Heart left ventricle (tissue), 16 donors: ENCODE measurements at regions of chr9 and their contacts with region 1.

Region 1: GRCh38 chr9:73104342-73104741 is 47.3 kb upstream of the ANXA1 start:
- DNase-seq: no peak
- ATAC-seq: no peak
- H3K4me3 ChIP-seq: no peak overlapping the region
- H3K27ac ChIP-seq: no peak overlapping the region
- H3K4me1 ChIP-seq: no peaks in the 10 kb centered on the region
- H3K27me3 ChIP-seq: no peaks in the 10 kb centered on the region
- CTCF ChIP-seq: no peak
- POLR2A ChIP-seq: no peak

Region 2: DNA sequence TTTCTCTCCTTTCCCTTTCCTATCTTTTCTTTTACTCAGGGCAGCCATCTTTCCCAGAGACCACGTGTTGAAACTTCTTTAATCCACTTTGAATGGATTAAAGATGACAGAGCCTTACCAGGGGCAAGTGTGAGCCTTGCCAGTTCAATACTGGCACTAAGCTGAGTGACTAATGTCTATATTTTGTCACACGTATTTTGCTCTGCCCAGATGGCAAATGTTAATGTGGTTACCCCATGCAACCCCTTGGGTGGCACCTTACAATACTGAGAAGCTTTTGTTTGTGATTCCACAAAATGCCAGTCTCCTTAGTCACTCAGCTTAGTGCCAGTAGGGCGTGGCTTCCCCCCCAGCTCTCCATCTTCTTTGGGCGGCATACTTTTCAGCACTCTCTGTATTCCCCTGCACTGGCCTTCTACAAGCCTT is 72.1 kb after region 1 on chr9:
- intact Hi-C with region 1: loop called in 4 of 10 experiments (anchors 2 to 5 kb)
- DNase-seq: no peak
- ATAC-seq: no peak
- H3K4me3 ChIP-seq: no peak overlapping the region
- H3K27ac ChIP-seq: no peak overlapping the region
- H3K4me1 ChIP-seq: peaks cover 0 to 19% (median 0%) of the 10 kb centered on the region in 12 donors
- H3K27me3 ChIP-seq: no peaks in the 10 kb centered on the region
- CTCF ChIP-seq: no peak
- POLR2A ChIP-seq: no peak